Keratinocyte (primary cell): ENCODE measurements at regions of chr3 and their contacts with region 1.

Region 1: DNA sequence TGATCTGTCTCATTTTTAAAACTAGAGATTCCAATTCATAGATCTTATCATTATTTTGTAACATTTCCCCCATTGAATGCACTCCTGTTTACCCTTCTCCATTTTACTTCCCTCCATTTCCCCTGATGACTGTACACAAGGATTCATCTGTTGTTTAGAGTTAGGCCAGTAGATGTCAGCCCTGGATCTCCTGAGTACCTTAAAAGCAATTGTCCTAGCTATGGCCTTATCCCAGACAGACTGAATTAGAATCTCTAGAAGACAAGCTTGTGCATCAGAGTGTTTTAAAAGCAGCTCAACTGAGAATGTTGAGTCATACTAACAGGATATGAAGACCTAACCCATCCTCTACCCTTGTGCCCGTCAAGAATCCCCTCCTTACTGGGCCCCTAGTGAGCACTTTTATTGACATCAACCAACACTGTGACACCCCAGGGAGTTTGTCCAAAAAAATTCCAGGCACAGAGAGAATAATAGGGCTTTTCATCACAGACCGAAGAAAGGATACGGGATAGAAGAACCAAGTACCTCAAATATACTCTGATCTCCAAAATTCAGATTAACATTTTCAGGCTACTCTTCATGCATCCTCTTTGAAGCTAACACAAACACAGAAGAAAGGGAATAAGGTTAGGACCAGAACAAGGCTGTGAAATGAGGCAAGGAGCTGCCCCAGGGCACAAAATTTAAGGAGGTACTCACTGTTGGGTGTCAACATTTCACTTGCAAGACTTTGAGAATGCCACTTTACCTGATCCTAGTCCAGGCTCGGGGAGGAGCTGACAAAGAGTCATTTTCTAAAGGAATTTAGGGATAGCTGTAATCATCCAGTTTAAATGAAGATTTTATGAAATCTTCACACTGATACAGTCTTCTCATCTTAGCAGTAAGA is 17.1 kb downstream of the ZBED2 start:
- DNase-seq: no peak
- H3K4me3 ChIP-seq: no peak overlapping the region
- H3K27ac ChIP-seq: peak overlapping the region; percentile 22
- H3K4me1 ChIP-seq: peaks cover 29% of the 10 kb centered on the region
- H3K27me3 ChIP-seq: no peaks in the 10 kb centered on the region
- CTCF ChIP-seq: peak; percentile 62 to 79 (median 66)

Region 2: DNA sequence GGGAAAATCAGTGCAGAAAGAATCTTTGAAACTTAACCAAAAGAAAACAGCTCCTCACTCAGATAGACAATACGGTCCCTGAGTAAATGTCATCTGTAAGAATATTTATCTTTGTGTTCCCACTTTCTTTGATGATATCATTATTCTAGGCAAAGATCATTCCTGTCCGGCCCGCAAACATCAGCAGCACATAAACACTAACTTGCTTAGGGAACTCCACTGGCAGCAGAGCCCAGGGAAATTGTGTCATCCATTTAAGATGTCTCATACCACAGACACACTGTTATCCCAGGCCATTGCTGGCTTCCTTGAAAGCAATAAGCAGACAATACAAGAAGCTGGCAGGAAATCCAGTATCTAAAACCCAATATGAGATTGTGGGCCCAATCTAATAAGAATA is 56.1 kb before region 1 on chr3:
- dilution Hi-C with region 1: no loop called
- DNase-seq: no peak
- H3K4me3 ChIP-seq: no peak overlapping the region
- H3K27ac ChIP-seq: no peak overlapping the region
- H3K4me1 ChIP-seq: no peaks in the 10 kb centered on the region
- H3K27me3 ChIP-seq: no peaks in the 10 kb centered on the region
- CTCF ChIP-seq: no peak

Region 3: GRCh38 chr3:111691293-111691909 is 113.4 kb after region 1 on chr3:
- dilution Hi-C with region 1: loop called (anchors 25 kb)
- DNase-seq: no peak
- H3K4me3 ChIP-seq: no peak overlapping the region
- H3K27ac ChIP-seq: no peak overlapping the region
- H3K4me1 ChIP-seq: peaks cover 34% of the 10 kb centered on the region
- H3K27me3 ChIP-seq: no peaks in the 10 kb centered on the region
- CTCF ChIP-seq: peak; percentile 37 to 48 (median 45)